ENCODE measurements at regions of chrX and their contacts with region 1.

Region 1: GRCh38 chrX:69210581-69210980 is 45.3 kb upstream of the PJA1 start:
- DNase-seq: no peak
- H3K4me3 ChIP-seq: no peak overlapping the region
- H3K27ac ChIP-seq: no peak overlapping the region
- H3K4me1 ChIP-seq: peaks cover 0 to 7% of the 10 kb centered on the region in 2 experiments; a peak in 1 of 4 replicates
- H3K27me3 ChIP-seq: peaks cover 20% of the 10 kb centered on the region; the same call in 1 of the 2 replicates
- CTCF ChIP-seq: no peak
- EP300 ChIP-seq: no peak
- RAD21 ChIP-seq: no peak

Region 2: GRCh38 chrX:68574240-68574639 is 636.3 kb before region 1 on chrX:
- CTCF ChIA-PET with region 1: no interaction called
- POLR2A ChIA-PET with region 1: no interaction called
- DNase-seq: no peak
- H3K4me3 ChIP-seq: no peak overlapping the region
- H3K27ac ChIP-seq: no peak overlapping the region
- H3K4me1 ChIP-seq: no peaks in the 10 kb centered on the region
- H3K27me3 ChIP-seq: peaks cover 15% of the 10 kb centered on the region; the same call in 1 of the 2 replicates
- CTCF ChIP-seq: no peak
- EP300 ChIP-seq: no peak
- RAD21 ChIP-seq: no peak

Region 3: DNA sequence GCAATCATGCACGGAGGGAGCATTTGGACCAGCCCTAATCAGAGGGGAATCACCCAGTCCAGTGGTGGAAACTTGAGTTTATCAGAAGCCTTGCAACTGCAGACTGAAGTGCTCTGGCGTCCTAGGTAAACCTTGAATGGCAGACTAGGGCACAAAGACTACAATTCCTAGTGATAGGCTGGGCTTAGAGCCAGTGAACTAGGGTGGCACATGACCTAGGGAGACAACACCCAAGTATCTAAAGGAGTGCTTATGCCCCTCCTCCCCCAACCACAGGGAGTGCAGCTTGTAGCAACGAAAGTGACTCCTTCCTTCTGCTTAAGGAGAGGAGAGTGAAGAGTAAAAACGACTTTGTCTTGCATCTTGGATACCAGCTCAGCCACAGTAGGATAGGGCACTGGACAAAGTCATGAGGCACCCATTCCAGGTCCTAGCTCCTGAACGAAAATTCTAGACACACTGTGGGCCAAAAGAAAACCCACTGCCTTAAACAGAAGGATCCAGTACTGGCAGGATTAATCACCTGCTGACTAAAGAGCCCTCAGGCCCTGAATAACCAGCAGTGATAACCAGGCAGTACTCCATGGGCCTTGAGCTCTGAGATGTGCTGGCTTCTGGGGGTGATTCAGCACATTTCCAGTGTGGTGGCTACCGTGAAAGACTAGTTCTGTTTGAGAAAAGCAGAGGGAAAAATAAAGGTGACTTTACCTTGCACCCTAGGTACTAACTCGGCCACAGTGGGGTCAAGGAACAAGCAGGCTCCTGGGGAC is 621.8 kb before region 1 on chrX:
- CTCF ChIA-PET with region 1: no interaction called
- POLR2A ChIA-PET with region 1: no interaction called
- DNase-seq: no peak
- H3K4me3 ChIP-seq: no peak overlapping the region
- H3K27ac ChIP-seq: no peak overlapping the region
- H3K4me1 ChIP-seq: no peaks in the 10 kb centered on the region
- H3K27me3 ChIP-seq: peaks cover 5% of the 10 kb centered on the region; the same call in 1 of the 2 replicates
- CTCF ChIP-seq: no peak
- EP300 ChIP-seq: no peak
- RAD21 ChIP-seq: no peak

Region 4: DNA sequence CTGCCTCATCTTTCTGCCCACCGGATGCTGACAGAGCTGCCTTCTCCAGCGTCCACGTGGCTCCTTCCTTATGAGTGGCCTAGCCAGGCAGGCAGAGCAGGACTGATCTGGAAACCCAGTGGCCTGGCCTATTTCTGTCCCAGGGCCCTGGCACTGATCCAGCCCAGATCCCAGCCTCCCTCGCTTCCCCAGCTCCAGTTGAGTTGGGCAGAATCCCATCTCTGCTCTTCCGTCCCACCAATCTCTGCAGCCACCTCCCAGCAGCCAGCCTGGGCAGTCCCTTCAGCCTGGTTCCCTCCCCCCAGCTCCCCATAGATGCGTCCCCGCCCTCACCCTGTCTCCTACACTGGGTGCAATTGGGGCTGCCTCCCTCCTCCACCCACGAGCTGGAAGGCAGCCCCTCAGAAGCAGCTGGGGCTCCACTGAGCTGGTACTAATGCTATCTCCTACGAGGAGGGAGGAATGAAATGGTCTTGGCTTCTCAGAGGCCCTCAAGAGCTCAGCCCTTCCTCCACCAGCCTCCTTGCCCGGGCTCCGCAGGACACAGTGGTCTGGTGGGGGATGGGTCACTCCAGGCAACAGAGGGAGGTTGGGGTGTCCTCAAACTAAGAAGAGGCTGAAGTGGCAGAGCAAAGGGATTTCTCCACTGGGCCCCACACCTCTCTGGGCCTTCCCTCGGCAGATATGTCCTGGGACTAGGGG is 139.5 kb before region 1 on chrX:
- CTCF ChIA-PET with region 1: no interaction called
- POLR2A ChIA-PET with region 1: no interaction called
- DNase-seq: peak; percentile 63
- H3K4me3 ChIP-seq: no peak overlapping the region
- H3K27ac ChIP-seq: peak overlapping the region in 1 of 2 experiments; percentile 78; a peak in 2 of 4 replicates
- H3K4me1 ChIP-seq: peaks cover 0 to 42% of the 10 kb centered on the region in 2 experiments; a peak in 1 of 4 replicates
- H3K27me3 ChIP-seq: no peaks in the 10 kb centered on the region; the same call in 1 of the 2 replicates
- CTCF ChIP-seq: no peak
- EP300 ChIP-seq: no peak
- RAD21 ChIP-seq: no peak

Region 5: GRCh38 chrX:69158166-69158980 is 52.2 kb before region 1 on chrX:
- CTCF ChIA-PET with region 1: interaction called, 12 read pairs
- POLR2A ChIA-PET with region 1: no interaction called
- DNase-seq: peak; percentile 65
- H3K4me3 ChIP-seq: no peak overlapping the region
- H3K27ac ChIP-seq: no peak overlapping the region
- H3K4me1 ChIP-seq: peaks cover 0 to 2% of the 10 kb centered on the region in 2 experiments; a peak in 1 of 4 replicates
- H3K27me3 ChIP-seq: peaks cover 7% of the 10 kb centered on the region; the same call in 1 of the 2 replicates
- CTCF ChIP-seq: peak; percentile 66
- EP300 ChIP-seq: no peak
- RAD21 ChIP-seq: peak; percentile 57

Region 6: DNA sequence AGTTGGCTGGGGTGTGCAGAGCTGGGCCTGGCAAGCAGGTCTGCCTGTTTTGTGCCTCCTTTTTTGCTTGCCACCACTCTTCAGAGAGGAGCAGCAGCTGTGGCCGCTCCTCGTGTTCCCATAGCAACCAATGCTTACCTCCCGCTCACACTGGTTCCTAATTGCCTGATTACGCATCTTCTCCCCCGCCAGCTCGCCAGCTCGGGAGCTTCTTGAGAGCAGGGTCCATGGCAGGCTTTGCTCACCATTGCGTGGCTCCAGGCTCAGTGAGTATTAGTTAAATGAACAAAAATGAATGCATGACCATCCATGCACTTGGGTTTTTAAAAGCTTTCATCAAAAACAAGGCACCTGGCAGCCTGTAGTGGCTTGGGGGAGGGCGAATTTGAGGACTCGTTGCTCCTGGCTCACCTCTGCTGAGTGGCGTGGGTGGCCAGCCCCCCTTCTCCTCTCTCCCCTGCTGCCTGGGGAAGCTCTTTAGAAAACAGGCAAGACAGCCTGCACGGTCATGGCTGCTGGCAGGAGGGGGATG is 31.1 kb before region 1 on chrX:
- CTCF ChIA-PET with region 1: no interaction called
- POLR2A ChIA-PET with region 1: no interaction called
- DNase-seq: peak; percentile 72
- H3K4me3 ChIP-seq: no peak overlapping the region
- H3K27ac ChIP-seq: no peak overlapping the region; a peak in 1 of 4 replicates
- H3K4me1 ChIP-seq: peaks cover 0 to 11% of the 10 kb centered on the region in 2 experiments; a peak in 1 of 4 replicates
- H3K27me3 ChIP-seq: peaks cover 27% of the 10 kb centered on the region
- CTCF ChIP-seq: no peak
- EP300 ChIP-seq: no peak
- RAD21 ChIP-seq: no peak

Measured in SK-N-SH (cell line).